Colonic mucosa (tissue), 4 donors: ENCODE measurements at regions of chr5 and their contacts with region 1.

Region 1: GRCh38 chr5:45038366-45038987 is 229.7 kb downstream of the MRPS30 start:
- DNase-seq: no peak
- H3K4me3 ChIP-seq: no peak overlapping the region
- H3K27ac ChIP-seq: no peak overlapping the region
- H3K4me1 ChIP-seq: no peaks in the 10 kb centered on the region
- H3K27me3 ChIP-seq: no peaks in the 10 kb centered on the region
- CTCF ChIP-seq: peak; percentile 48

Region 2: DNA sequence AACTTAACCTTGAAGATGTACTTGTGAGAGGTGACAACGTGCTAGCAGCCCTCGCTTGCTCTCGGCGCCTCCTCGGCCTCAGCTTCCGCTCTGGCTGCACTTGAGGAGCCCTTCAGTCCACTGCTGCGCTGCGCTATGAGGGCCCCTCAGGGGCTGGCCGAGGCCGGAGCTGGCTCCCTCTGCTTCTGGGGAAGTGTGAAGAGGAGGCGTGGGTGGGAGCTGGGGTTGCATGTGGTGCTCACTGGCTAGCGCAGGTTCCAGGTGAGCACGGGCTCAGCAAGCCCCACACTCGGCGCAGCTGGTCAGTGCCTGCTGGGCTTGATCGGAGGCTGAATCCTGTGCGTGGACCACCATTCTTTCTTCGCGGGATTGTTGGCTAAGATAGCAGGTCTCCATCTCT is 63.7 kb before region 1 on chr5:
- intact Hi-C with region 1: no loop called
- DNase-seq: no peak
- H3K4me3 ChIP-seq: no peak overlapping the region
- H3K27ac ChIP-seq: no peak overlapping the region
- H3K4me1 ChIP-seq: no peaks in the 10 kb centered on the region
- H3K27me3 ChIP-seq: no peaks in the 10 kb centered on the region
- CTCF ChIP-seq: no peak

Region 3: GRCh38 chr5:45521067-45521466 is 482.6 kb after region 1 on chr5:
- intact Hi-C with region 1: loop called (anchors 2 kb)
- DNase-seq: peak; percentile 67
- H3K4me3 ChIP-seq: no peak overlapping the region
- H3K27ac ChIP-seq: no peak overlapping the region
- H3K4me1 ChIP-seq: no peaks in the 10 kb centered on the region
- H3K27me3 ChIP-seq: no peaks in the 10 kb centered on the region
- CTCF ChIP-seq: peak; percentile 39

Region 4: GRCh38 chr5:45696206-45696836 is 657.8 kb after region 1 on chr5 and contains the start of gene HCN1:
- intact Hi-C with region 1: loop called (anchors 10 kb)
- DNase-seq: peak; percentile 78
- H3K4me3 ChIP-seq: no peak within 1 kb of the TSS
- H3K27ac ChIP-seq: no peak within 1 kb of the TSS
- H3K4me1 ChIP-seq: no peaks in the 10 kb centered on the region
- H3K27me3 ChIP-seq: peaks cover 21% of the 10 kb centered on the region
- CTCF ChIP-seq: peak; percentile 44
- total RNA-seq, gene HCN1: 0.07 to 0.11 TPM